Activated CD4-positive, alpha-beta memory T cell treated with anti-CD3 and anti-CD28 coated beads, Interleukin-2, amount 10 ng/mL, durations not matched to agents 7 days and 5 days (primary cell): ENCODE measurements at regions of chr21 and their contacts with region 1.

Region 1: DNA sequence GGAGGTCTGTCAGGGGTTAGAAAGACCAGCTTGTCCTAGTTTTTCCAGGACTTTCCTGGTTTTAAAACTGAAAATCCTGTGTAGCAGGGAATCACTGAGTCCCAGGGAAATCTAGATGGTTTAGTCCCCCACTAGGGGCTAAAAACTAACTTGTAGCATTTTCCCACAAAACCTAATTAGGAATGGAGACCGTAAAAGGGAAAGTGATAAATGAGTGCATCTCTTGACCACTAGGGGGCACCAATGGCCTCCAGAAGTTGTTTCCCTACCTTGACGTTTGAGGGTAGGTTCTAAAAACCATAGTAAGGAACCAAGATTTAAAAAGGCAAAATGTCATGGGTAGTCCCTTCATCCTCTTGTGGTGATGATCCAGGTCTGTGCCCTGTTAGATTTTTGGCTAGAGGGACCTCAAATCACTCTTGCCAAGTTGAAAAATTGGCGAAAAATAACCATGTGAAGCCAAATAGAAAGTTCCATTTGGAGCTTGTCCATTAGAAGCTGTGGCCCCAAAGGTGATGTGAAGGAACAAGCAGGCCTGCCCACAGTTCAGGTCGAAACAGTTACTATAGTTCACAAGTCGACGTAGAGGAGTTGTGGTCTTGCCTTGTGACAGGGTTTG is 24.5 kb downstream of the CLIC6 start:
- DNase-seq: peak; percentile 49
- H3K4me3 Mint-ChIP-seq: no peak overlapping the region
- H3K27ac Mint-ChIP-seq: no peak overlapping the region
- H3K4me1 Mint-ChIP-seq: peaks cover 7% of the 10 kb centered on the region
- H3K27me3 Mint-ChIP-seq: peaks cover 37% of the 10 kb centered on the region

Region 2: GRCh38 chr21:34707876-34708325 is 14.6 kb after region 1 on chr21:
- CTCF ChIA-PET with region 1: interaction called, 10 read pairs
- POLR2A ChIA-PET with region 1: interaction called, 3 read pairs
- DNase-seq: peak; percentile 48
- H3K4me3 Mint-ChIP-seq: no peak overlapping the region
- H3K27ac Mint-ChIP-seq: no peak overlapping the region
- H3K4me1 Mint-ChIP-seq: peaks cover 23% of the 10 kb centered on the region
- H3K27me3 Mint-ChIP-seq: peaks cover 43% of the 10 kb centered on the region

Region 3: GRCh38 chr21:34726627-34727337 is 33.5 kb after region 1 on chr21:
- CTCF ChIA-PET with region 1: interaction called, 13 read pairs
- POLR2A ChIA-PET with region 1: no interaction called
- DNase-seq: peak; percentile 27
- H3K4me3 Mint-ChIP-seq: peak overlapping the region; percentile 41
- H3K27ac Mint-ChIP-seq: peak overlapping the region; percentile 63
- H3K4me1 Mint-ChIP-seq: peaks cover 41% of the 10 kb centered on the region
- H3K27me3 Mint-ChIP-seq: peaks cover 29% of the 10 kb centered on the region

Region 4: GRCh38 chr21:34754690-34755647 is 61.7 kb after region 1 on chr21:
- CTCF ChIA-PET with region 1: no interaction called
- POLR2A ChIA-PET with region 1: no interaction called
- DNase-seq: no peak
- H3K4me3 Mint-ChIP-seq: no peak overlapping the region
- H3K27ac Mint-ChIP-seq: no peak overlapping the region
- H3K4me1 Mint-ChIP-seq: no peaks in the 10 kb centered on the region
- H3K27me3 Mint-ChIP-seq: peaks cover 35% of the 10 kb centered on the region

Region 5: DNA sequence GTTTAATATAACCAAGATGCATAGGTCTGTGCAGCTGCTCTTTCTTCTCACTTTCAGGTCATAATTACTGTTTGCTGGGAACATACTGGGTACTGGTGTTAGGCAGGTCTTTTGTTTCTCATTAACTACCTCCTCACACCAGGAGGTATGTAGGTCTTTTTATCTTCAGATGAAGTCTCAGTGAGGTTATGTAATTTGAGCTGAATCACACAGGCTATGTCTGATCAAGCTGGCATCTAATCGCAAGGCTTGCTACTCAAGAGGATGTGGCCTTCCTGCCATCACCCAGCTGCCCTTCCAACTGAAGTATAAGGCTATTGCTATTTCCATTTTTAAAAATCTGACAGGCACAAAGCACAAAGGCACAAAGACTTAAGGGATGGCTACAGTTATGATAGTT is 259.4 kb after region 1 on chr21:
- CTCF ChIA-PET with region 1: no interaction called
- POLR2A ChIA-PET with region 1: no interaction called
- DNase-seq: no peak
- H3K4me3 Mint-ChIP-seq: no peak overlapping the region
- H3K27ac Mint-ChIP-seq: no peak overlapping the region
- H3K4me1 Mint-ChIP-seq: peaks cover 54% of the 10 kb centered on the region
- H3K27me3 Mint-ChIP-seq: no peaks in the 10 kb centered on the region

Region 6: DNA sequence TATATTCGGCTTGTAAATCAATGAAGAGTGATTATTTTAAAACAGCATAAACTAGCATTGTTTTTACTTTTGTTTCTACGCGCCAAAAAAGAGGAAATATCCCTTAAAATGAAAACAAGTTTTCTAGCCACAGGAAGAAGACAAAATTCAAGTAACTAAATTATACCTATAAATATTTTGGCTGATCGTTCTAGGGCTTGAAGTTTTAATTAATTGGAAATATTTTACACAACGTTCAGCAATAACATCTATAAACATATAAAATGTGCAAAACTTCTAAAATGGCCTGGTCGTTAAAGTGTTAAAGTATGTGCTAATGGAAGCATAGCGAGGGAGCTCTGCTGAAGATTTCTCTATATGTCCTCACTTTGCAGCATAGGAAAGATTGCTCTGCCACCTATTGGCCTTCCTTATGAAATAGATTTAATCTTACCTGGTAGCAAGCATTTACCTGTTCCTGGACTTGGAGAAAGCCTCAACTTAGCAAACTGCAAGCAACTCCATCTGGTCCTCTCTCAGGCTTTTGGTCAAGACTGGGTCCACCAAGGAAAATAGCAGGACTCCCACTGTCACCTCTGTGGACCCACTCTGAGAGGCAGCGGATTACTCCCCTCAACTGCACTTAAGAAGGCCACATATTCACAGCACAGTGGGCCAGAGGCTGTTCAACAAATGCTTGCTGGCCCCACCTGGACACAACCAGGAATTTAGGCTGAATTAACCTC is 707.1 kb after region 1 on chr21:
- CTCF ChIA-PET with region 1: interaction called, 13 read pairs
- POLR2A ChIA-PET with region 1: no interaction called
- DNase-seq: peak; percentile 27
- H3K4me3 Mint-ChIP-seq: no peak overlapping the region
- H3K27ac Mint-ChIP-seq: no peak overlapping the region
- H3K4me1 Mint-ChIP-seq: peaks cover 14% of the 10 kb centered on the region
- H3K27me3 Mint-ChIP-seq: no peaks in the 10 kb centered on the region

Region 7: GRCh38 chr21:35840197-35840799 is 1147.0 kb after region 1 on chr21:
- CTCF ChIA-PET with region 1: interaction called, 19 read pairs
- POLR2A ChIA-PET with region 1: no interaction called
- DNase-seq: peak; percentile 52
- H3K4me3 Mint-ChIP-seq: no peak overlapping the region
- H3K27ac Mint-ChIP-seq: no peak overlapping the region
- H3K4me1 Mint-ChIP-seq: no peaks in the 10 kb centered on the region
- H3K27me3 Mint-ChIP-seq: peaks cover 13% of the 10 kb centered on the region